ENCODE measurements at regions of chr11 and their contacts with region 1.

Region 1: DNA sequence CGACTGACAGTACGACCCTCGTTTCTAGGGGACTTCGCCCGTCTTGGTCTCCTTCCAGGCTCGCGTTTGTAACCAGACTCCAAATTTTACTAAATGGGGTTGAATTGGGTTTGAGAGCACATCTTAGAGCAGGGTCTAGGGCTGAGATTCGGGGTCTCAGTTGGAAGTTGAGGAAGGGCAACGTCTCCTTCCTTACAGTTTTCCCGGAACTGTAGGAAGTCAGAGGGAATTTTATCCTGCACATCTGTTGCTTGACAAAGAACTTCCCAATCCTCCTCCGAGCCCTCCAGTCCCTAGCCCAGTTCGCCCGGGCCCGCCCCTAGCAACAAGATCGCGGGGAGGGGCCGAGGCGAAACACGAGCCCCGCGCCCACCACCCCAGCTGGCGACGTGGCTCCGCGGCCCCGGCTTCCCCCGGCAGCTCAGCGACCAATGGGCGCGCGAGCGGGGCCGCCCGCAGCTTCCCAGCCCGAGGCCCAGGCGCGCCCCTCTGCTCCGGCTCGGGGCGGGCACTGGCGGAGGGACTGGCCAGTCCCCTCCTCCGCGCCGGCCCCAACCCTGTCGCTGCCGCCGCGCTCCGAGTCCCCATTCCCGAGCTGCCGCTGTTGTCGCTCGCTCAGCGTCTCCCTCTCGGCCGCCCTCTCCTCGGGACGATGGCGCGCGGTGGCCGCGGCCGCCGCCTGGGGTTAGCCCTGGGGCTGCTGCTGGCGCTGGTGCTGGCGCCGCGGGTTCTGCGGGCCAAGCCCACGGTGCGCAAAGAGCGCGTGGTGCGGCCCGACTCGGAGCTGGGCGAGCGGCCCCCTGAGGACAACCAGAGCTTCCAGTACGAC is at the start of gene RCN1:
- DNase-seq: peak; percentile 30
- H3K4me3 Mint-ChIP-seq: peak within 1 kb of the TSS; percentile 85
- H3K27ac Mint-ChIP-seq: peak within 1 kb of the TSS; percentile 88
- H3K4me1 Mint-ChIP-seq: peaks cover 41% of the 10 kb centered on the region
- H3K27me3 Mint-ChIP-seq: peaks cover 4% of the 10 kb centered on the region
- total RNA-seq, gene RCN1: 30.9 and 36.5 TPM in 2 replicates

Region 2: GRCh38 chr11:31369348-31370329 is 721.1 kb before region 1 on chr11 and contains the starts of genes DCDC1 and DNAJC24:
- intact Hi-C with region 1: loop called (anchors 5 kb)
- DNase-seq: peak; percentile 89
- H3K4me3 Mint-ChIP-seq: peak within 1 kb of the TSS; percentile 99
- H3K27ac Mint-ChIP-seq: peak within 1 kb of the TSS; percentile 95
- H3K4me1 Mint-ChIP-seq: peaks cover 25% of the 10 kb centered on the region
- H3K27me3 Mint-ChIP-seq: peaks cover 7% of the 10 kb centered on the region
- total RNA-seq, gene DCDC1: not detected in 2 replicates
- total RNA-seq, gene DNAJC24: 15.8 and 20.6 TPM in 2 replicates

Region 3: GRCh38 chr11:31509429-31510345 is 581.1 kb before region 1 on chr11 and contains the starts of genes ELP4 and IMMP1L:
- intact Hi-C with region 1: loop called (anchors 5 kb)
- DNase-seq: peak; percentile 94
- H3K4me3 Mint-ChIP-seq: peak within 1 kb of the TSS; percentile 99
- H3K27ac Mint-ChIP-seq: peak within 1 kb of the TSS; percentile 94
- H3K4me1 Mint-ChIP-seq: peaks cover 47% of the 10 kb centered on the region
- H3K27me3 Mint-ChIP-seq: no peaks in the 10 kb centered on the region
- total RNA-seq, gene ELP4: 15.1 and 17.3 TPM in 2 replicates
- total RNA-seq, gene IMMP1L: 22.3 and 24.6 TPM in 2 replicates

Region 4: GRCh38 chr11:32231905-32232493 is 141.2 kb after region 1 on chr11:
- intact Hi-C with region 1: no loop called
- DNase-seq: no peak
- H3K4me3 Mint-ChIP-seq: no peak overlapping the region
- H3K27ac Mint-ChIP-seq: no peak overlapping the region
- H3K4me1 Mint-ChIP-seq: no peaks in the 10 kb centered on the region
- H3K27me3 Mint-ChIP-seq: peaks cover 5% of the 10 kb centered on the region

Region 5: GRCh38 chr11:32527261-32528175 is 436.8 kb after region 1 on chr11:
- intact Hi-C with region 1: no loop called
- DNase-seq: no peak
- H3K4me3 Mint-ChIP-seq: no peak overlapping the region
- H3K27ac Mint-ChIP-seq: no peak overlapping the region
- H3K4me1 Mint-ChIP-seq: no peaks in the 10 kb centered on the region
- H3K27me3 Mint-ChIP-seq: no peaks in the 10 kb centered on the region

Measured in activated T-helper 1 cell treated with anti-CD3 and anti-CD28 coated beads, Interleukin-12 subunit alpha, Interleukin-12 subunit beta, Interleukin-2, Interleukin-4 antibody, amounts not matched to agents 30 ng/mL and 10 ng/mL and 1 ng/mL, durations not matched to agents 14 hours and 24 hours and 36 hours (primary cell).